ENCODE measurements at regions of chr17 and their contacts with region 1.

Region 1: GRCh38 chr17:64262417-64263260 is at the start of gene TEX2:
- DNase-seq: peak; percentile 62
- H3K4me3 ChIP-seq: peak within 1 kb of the TSS; percentile 82
- H3K27ac ChIP-seq: peak within 1 kb of the TSS; percentile 79
- H3K4me1 ChIP-seq: peaks cover 6% of the 10 kb centered on the region
- H3K27me3 ChIP-seq: no peaks in the 10 kb centered on the region
- CTCF ChIP-seq: no peak
- total RNA-seq, gene TEX2: 29.0 to 29.7 TPM

Region 2: DNA sequence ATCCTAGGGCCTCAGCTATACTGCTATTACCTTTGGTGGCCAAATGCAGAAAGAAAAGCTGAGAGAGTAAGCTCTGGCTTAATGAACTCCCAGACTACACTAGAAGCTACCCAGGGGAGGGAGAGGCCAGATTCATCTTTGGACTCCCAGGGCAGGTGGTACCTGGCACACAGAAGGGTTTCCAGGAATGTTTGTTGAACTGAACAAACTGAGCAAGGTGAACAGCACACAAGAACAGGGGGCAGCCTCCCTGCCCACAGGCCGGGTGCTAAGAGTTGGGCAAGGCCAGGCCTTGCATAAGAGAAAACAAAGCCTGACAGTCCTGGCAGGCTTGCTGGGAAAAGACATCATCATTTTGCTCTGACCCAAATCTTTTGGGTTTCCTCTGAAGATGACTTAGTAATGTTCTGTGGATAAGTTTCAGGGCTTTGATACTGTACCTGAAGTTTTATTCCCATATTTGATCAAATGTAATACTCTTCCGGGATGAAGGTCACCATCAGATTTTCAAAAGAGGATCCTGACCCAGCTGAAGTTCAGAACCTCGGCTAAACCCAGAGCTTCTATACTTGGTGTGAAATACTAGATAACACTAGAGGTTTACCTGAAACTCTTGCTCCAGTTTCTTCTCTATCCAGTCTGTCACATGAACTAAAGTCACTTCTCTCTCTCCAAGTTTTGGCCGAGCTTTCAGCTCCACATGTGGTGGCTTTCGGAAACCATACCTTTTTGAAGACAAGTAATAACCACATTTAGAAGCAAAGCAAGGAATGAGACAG is 112.2 kb before region 1 on chr17:
- intact Hi-C with region 1: loop called (anchors 5 kb)
- DNase-seq: peak; percentile 58
- H3K4me3 ChIP-seq: no peak overlapping the region
- H3K27ac ChIP-seq: no peak overlapping the region
- H3K4me1 ChIP-seq: no peaks in the 10 kb centered on the region
- H3K27me3 ChIP-seq: no peaks in the 10 kb centered on the region
- CTCF ChIP-seq: no peak

Measured in colonic mucosa (tissue), 4 donors.